Left cardiac atrium (tissue), 4 donors: ENCODE measurements at regions of chr1 and their contacts with region 1.

Region 1: DNA sequence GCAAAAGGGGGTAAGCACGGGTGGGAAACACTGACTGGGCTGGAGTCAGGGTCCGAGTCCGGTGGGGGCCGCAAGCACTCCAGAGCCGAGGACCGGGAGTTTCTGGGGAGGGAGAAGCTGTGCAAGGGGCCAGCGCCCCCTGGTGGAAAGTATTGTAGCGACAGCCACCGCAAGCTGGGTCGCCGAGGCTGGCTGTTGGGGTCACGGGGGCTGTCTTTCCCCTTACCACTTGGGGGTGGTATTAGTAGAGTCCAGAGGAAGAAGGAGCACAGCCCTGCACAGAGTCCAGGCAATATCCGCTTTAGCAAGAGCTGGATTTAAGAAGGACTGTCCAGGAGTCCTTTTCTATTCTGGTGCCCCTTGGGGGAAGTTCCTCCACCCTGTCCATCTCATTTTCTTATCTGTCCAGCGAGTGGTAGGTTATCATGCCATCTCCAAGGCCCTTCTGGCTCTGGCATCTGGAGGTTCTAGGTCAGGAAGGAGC is 17.9 kb upstream of the ETV3 start:
- DNase-seq: peak; percentile 81
- ATAC-seq: peak; percentile 73 to 79

Region 2: GRCh38 chr1:156948708-156949107 is 207.4 kb before region 1 on chr1:
- intact Hi-C with region 1: no loop called
- DNase-seq: no peak
- ATAC-seq: no peak

Region 3: GRCh38 chr1:157090196-157090647 is 65.9 kb before region 1 on chr1:
- intact Hi-C with region 1: loop called (anchors 1 to 2 kb)
- DNase-seq: peak; percentile 89
- ATAC-seq: peak; percentile 82 to 89